Caco-2 (cell line): ENCODE measurements at regions of chr15 and their contacts with region 1.

Region 1: DNA sequence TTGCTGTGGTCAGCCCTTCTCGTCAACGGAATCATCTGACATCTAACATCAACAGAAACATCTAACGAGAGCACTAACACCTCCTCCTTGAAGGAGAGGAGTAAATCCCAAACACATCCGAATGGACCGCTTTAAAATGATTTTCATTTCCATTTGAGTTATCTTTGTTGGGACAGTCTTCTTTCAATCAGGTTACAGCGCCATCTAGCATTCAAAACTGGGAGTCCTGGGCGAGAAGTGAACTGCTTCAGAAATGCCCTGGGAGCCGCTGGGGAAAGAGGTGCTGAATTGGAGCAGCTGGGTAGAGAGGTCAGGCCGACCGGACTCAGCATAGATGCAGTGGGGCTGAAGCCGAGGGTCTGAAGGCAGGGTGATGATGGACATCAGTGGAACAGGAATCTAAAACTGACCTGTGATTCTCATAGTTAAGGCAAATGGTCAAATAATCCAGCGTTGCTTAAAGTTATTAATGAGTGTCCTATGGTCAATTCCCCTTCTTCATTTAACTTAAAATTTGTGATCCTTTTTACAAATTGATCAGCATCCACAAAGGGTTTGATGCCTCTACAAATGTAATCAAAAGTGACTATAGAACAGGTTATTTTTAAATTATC is 170.0 kb upstream of the NDN start:
- DNase-seq: peak; percentile 58 to 64
- H3K4me3 ChIP-seq: no peak overlapping the region
- H3K4me3 Mint-ChIP-seq: no peak overlapping the region
- H3K27ac Mint-ChIP-seq: no peak overlapping the region
- H3K4me1 ChIP-seq: no peaks in the 10 kb centered on the region
- H3K4me1 Mint-ChIP-seq: no peaks in the 10 kb centered on the region
- H3K27me3 ChIP-seq: no peaks in the 10 kb centered on the region
- H3K27me3 Mint-ChIP-seq: peaks cover 13% of the 10 kb centered on the region
- CTCF ChIP-seq: peak; percentile 57 to 71

Region 2: GRCh38 chr15:23648920-23649515 is 208.1 kb before region 1 on chr15:
- CTCF ChIA-PET with region 1: interaction called, 5 read pairs
- POLR2A ChIA-PET with region 1: no interaction called
- intact Hi-C with region 1: loop called (anchors 1 kb)
- DNase-seq: peak; percentile 45 to 66
- H3K4me3 ChIP-seq: no peak overlapping the region
- H3K4me3 Mint-ChIP-seq: no peak overlapping the region
- H3K27ac Mint-ChIP-seq: no peak overlapping the region
- H3K4me1 ChIP-seq: no peaks in the 10 kb centered on the region
- H3K4me1 Mint-ChIP-seq: no peaks in the 10 kb centered on the region
- H3K27me3 ChIP-seq: no peaks in the 10 kb centered on the region
- H3K27me3 Mint-ChIP-seq: peaks cover 15% of the 10 kb centered on the region
- CTCF ChIP-seq: peak; percentile 68 to 85

Region 3: DNA sequence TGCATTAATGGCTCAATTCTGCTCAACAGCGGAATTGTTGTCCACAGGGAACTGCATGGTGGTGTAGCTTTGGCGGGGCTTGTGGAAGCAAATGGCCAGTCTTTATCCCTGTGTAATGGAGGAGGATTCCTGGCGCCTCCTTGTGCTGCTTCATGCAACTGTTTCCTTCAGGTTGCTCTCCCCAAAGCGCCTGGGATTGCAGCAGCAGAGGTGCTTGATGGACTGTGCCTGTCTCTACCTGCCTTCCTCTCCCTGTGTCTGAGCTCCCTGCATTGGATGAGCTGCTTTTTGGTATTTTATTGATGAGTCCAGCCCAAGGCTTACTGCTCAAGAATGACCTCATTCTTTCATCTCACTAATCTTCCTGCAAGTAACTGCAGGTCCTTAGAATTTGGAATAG is 97.1 kb before region 1 on chr15:
- CTCF ChIA-PET with region 1: no interaction called
- POLR2A ChIA-PET with region 1: no interaction called
- intact Hi-C with region 1: no loop called
- DNase-seq: peak in 1 of 2 experiments; percentile 8
- H3K4me3 ChIP-seq: no peak overlapping the region
- H3K4me3 Mint-ChIP-seq: no peak overlapping the region
- H3K27ac Mint-ChIP-seq: no peak overlapping the region
- H3K4me1 ChIP-seq: no peaks in the 10 kb centered on the region
- H3K4me1 Mint-ChIP-seq: no peaks in the 10 kb centered on the region
- H3K27me3 ChIP-seq: no peaks in the 10 kb centered on the region
- H3K27me3 Mint-ChIP-seq: peaks cover 6% of the 10 kb centered on the region
- CTCF ChIP-seq: peak in 1 of 2 experiments; percentile 7

Region 4: GRCh38 chr15:23823508-23823907 is 33.6 kb before region 1 on chr15:
- CTCF ChIA-PET with region 1: no interaction called
- POLR2A ChIA-PET with region 1: no interaction called
- intact Hi-C with region 1: loop called (anchors 2 kb)
- DNase-seq: peak in 1 of 2 experiments; percentile 24
- H3K4me3 ChIP-seq: no peak overlapping the region
- H3K4me3 Mint-ChIP-seq: no peak overlapping the region
- H3K27ac Mint-ChIP-seq: no peak overlapping the region
- H3K4me1 ChIP-seq: no peaks in the 10 kb centered on the region
- H3K4me1 Mint-ChIP-seq: no peaks in the 10 kb centered on the region
- H3K27me3 ChIP-seq: no peaks in the 10 kb centered on the region
- H3K27me3 Mint-ChIP-seq: peaks cover 3% of the 10 kb centered on the region
- CTCF ChIP-seq: peak in 1 of 2 experiments; percentile 15

Region 5: GRCh38 chr15:23897531-23897930 is 40.4 kb after region 1 on chr15:
- CTCF ChIA-PET with region 1: no interaction called
- POLR2A ChIA-PET with region 1: no interaction called
- intact Hi-C with region 1: no loop called
- DNase-seq: no peak
- H3K4me3 ChIP-seq: no peak overlapping the region
- H3K4me3 Mint-ChIP-seq: no peak overlapping the region
- H3K27ac Mint-ChIP-seq: no peak overlapping the region
- H3K4me1 ChIP-seq: no peaks in the 10 kb centered on the region
- H3K4me1 Mint-ChIP-seq: no peaks in the 10 kb centered on the region
- H3K27me3 ChIP-seq: no peaks in the 10 kb centered on the region
- H3K27me3 Mint-ChIP-seq: no peaks in the 10 kb centered on the region
- CTCF ChIP-seq: no peak

Region 6: DNA sequence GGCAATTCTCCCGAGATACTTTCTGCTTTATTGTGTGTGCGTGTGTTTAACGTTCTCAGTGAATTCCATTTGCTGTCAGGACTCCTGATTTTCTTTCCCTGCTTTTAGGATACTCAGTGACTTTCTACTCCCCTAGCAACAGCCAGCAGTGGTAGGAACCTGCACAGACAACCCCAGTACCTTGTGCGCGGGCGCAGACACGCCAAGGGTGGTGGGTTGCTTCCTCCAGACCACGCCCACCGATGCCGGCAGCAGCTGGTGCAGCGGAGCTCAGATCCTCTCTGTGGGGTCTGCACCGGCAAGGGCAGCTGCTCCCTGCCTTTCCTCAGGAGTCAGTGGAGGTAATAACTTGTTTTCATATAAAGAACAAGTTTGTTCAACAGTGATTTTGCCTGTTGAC is 55.1 kb after region 1 on chr15:
- CTCF ChIA-PET with region 1: no interaction called
- POLR2A ChIA-PET with region 1: no interaction called
- intact Hi-C with region 1: no loop called
- DNase-seq: no peak
- H3K4me3 ChIP-seq: no peak overlapping the region
- H3K4me3 Mint-ChIP-seq: no peak overlapping the region
- H3K27ac Mint-ChIP-seq: no peak overlapping the region
- H3K4me1 ChIP-seq: no peaks in the 10 kb centered on the region
- H3K4me1 Mint-ChIP-seq: no peaks in the 10 kb centered on the region
- H3K27me3 ChIP-seq: no peaks in the 10 kb centered on the region
- H3K27me3 Mint-ChIP-seq: peaks cover 6% of the 10 kb centered on the region
- CTCF ChIP-seq: no peak